Activated CD4-positive, alpha-beta memory T cell treated with anti-CD3 and anti-CD28 coated beads, Interleukin-2, amount 10 ng/mL, durations not matched to agents 7 days and 5 days (primary cell): ENCODE measurements at regions of chr6 and their contacts with region 1.

Region 1: GRCh38 chr6:170147832-170148708 is 142.8 kb downstream of the DLL1 start:
- DNase-seq: peak; percentile 73
- H3K4me3 Mint-ChIP-seq: peak overlapping the region; percentile 64
- H3K27ac Mint-ChIP-seq: peak overlapping the region; percentile 89
- H3K4me1 Mint-ChIP-seq: peaks cover 35% of the 10 kb centered on the region
- H3K27me3 Mint-ChIP-seq: peaks cover 18% of the 10 kb centered on the region

Region 2: DNA sequence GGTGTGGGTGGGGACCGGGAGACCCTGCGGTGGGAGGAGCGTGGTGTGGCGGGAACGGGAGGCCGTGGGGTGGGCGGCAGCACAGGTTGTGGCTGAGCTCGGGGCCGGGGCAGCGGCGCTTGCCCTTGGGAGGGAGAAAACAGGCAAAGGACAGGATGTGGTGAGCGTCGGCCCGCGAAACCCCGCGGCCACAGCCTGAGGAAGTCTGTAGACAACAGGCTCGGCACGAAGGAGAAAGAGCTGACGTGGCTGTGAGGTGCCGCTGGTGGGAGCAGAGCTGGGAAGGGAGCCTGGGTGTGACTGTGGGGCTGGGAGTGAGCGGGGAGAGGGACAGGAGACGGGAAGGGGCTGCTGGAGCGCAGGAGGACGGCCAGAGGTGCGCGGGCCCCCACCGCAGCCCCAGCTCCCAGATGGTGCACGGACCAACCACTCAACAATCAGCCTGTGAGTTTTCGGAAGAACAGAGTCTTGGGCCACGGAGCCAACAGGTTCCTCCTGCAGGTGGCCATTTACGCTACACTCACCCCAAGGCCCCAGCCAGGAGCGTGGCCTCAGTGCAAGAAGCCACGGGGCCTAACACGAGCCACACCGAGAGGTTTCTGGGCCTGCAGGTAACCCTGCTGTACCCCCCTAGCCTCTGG is 60.0 kb before region 1 on chr6:
- CTCF ChIA-PET with region 1: interaction called, 7 read pairs
- POLR2A ChIA-PET with region 1: interaction called, 30 read pairs
- DNase-seq: peak; percentile 81
- H3K4me3 Mint-ChIP-seq: peak overlapping the region; percentile 83
- H3K27ac Mint-ChIP-seq: peak overlapping the region; percentile 96
- H3K4me1 Mint-ChIP-seq: peaks cover 38% of the 10 kb centered on the region
- H3K27me3 Mint-ChIP-seq: no peaks in the 10 kb centered on the region

Region 3: DNA sequence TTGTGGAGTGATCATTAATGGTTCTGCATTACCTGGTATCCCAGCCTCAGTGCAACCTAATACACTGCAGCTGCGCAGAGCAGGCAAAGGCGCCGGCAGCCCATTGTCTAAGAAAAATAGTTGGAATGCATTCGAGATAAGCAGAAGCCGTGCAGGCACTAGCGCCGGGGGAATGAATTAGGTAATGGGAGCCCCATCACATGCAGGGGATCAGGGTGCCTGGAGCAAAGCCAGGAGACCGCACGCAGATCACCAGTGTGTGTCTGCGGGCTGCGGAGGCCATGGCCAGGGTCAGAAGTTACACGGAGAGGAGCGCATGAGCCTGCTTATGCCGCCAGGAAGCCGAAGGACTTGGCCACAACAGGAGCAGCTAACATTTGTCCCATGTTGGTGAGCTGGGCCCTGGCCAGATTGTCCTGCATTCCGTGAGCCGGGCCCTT is 14.0 kb before region 1 on chr6:
- CTCF ChIA-PET with region 1: no interaction called
- POLR2A ChIA-PET with region 1: no interaction called
- DNase-seq: no peak
- H3K4me3 Mint-ChIP-seq: no peak overlapping the region
- H3K27ac Mint-ChIP-seq: no peak overlapping the region
- H3K4me1 Mint-ChIP-seq: no peaks in the 10 kb centered on the region
- H3K27me3 Mint-ChIP-seq: no peaks in the 10 kb centered on the region

Region 4: DNA sequence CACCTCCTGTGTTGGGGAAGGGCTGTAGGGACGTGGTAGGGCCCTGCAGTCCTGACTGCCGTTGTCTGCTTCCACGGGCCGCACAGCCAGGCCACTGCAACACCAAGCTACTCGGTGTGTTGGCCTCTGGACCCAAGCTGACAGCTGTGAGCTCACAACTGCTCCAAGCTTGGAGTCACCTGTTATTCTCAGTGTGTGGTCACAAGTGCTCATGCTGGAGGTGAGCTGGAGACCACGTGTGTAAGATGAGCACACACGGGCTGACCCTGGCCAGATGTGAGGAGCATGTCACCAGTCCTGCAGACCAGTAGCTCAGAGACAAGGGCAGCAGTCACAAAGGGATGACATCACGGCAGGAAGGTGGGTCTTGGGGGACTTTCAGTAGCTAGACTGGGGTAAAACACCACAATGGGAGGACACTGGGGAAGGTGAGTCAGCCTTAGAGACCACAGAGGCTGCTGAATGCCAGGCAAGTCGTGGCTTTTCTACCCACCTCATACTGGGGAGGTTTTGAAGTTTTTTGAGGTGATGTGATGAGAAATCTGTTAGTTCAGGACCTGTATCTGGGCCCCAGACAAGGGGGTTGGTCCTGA is 245.8 kb after region 1 on chr6:
- CTCF ChIA-PET with region 1: no interaction called
- POLR2A ChIA-PET with region 1: no interaction called
- DNase-seq: peak; percentile 42
- H3K4me3 Mint-ChIP-seq: no peak overlapping the region
- H3K27ac Mint-ChIP-seq: peak overlapping the region; percentile 16
- H3K4me1 Mint-ChIP-seq: peaks cover 8% of the 10 kb centered on the region
- H3K27me3 Mint-ChIP-seq: no peaks in the 10 kb centered on the region